Activated CD4-positive, alpha-beta memory T cell treated with anti-CD3 and anti-CD28 coated beads, Interleukin-2, amount 10 ng/mL, durations not matched to agents 7 days and 5 days (primary cell): ENCODE measurements at regions of chr21 and their contacts with region 1.

Region 1: GRCh38 chr21:36319765-36320420 is at the start of gene MORC3:
- DNase-seq: peak; percentile 99
- H3K4me3 Mint-ChIP-seq: peak within 1 kb of the TSS; percentile 88
- H3K27ac Mint-ChIP-seq: peak within 1 kb of the TSS; percentile 96
- H3K4me1 Mint-ChIP-seq: peaks cover 26% of the 10 kb centered on the region
- H3K27me3 Mint-ChIP-seq: peaks cover 3% of the 10 kb centered on the region
- total RNA-seq, gene MORC3: 43.6 to 44.3 TPM

Region 2: GRCh38 chr21:36135391-36136102 is 184.3 kb before region 1 on chr21:
- CTCF ChIA-PET with region 1: interaction called, 8 read pairs
- POLR2A ChIA-PET with region 1: interaction called, 52 read pairs
- DNase-seq: peak; percentile 80
- H3K4me3 Mint-ChIP-seq: peak overlapping the region; percentile 80
- H3K27ac Mint-ChIP-seq: peak overlapping the region; percentile 91
- H3K4me1 Mint-ChIP-seq: peaks cover 45% of the 10 kb centered on the region
- H3K27me3 Mint-ChIP-seq: no peaks in the 10 kb centered on the region

Region 3: DNA sequence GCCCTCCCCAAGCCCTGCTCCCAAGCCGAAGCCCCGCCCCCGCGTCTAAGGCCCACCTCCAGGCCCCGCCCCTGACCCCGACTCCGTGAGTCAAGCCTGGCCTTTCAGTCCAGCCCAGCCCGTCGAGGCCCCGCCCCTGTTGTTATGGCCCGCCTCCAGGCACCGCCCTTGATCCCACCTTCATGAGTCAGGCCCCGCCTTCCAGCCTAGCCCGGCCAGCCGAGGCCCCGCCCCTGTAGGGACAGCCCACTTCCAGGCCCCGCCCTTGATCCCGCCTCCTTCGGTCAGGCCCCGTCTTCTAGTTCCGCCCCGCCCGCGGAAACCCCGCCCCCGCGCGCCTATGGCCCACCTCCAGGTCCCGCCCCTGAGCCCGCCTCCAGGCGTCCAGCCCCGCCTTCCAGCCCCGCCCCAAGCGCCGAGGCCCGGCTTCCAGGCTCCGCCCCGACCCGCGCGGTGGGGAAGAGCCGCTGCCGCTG is 163.5 kb before region 1 on chr21:
- CTCF ChIA-PET with region 1: interaction called, 5 read pairs
- POLR2A ChIA-PET with region 1: interaction called, 13 read pairs
- DNase-seq: peak; percentile 100
- H3K4me3 Mint-ChIP-seq: peak overlapping the region; percentile 80
- H3K27ac Mint-ChIP-seq: peak overlapping the region; percentile 31
- H3K4me1 Mint-ChIP-seq: peaks cover 41% of the 10 kb centered on the region
- H3K27me3 Mint-ChIP-seq: peaks cover 6% of the 10 kb centered on the region

Region 4: DNA sequence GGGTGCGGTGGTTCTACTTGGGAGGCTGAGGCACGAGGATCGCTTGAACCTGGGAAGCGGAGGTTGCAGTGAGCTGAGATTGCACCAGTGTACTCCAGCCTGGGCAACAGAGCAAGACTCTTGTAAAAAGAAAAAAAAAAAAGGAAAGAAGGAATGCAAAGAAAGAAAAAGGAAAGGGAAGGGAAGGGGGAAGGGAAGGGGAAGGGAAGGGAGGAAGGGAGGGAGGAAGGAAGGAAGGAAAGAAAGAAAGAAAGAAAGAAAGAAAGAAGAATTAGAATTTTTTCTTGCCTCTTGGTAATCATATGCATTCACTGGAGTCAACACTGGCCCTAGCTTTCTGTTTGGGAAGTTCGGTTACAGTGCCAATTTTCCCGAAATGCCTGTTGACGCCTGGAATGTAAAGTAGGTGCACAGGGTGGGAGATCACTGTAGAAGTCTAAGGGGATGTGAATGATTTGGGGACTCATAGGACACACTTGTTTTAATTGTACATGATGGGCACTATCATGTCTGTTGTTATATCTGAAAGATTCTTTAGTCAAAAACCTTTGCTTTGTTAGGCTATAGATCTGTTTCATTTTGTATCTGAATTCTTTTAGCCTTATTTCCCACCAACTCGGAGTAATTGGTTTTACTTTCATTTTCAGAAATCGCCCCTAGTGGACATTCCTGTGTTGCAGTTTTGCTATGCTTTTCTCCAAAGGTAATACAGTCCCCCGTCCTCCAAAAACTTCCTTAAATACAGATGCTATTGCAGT is 59.7 kb before region 1 on chr21:
- CTCF ChIA-PET with region 1: interaction called, 8 read pairs
- POLR2A ChIA-PET with region 1: interaction called, 12 read pairs
- DNase-seq: peak; percentile 46
- H3K4me3 Mint-ChIP-seq: peak overlapping the region; percentile 60
- H3K27ac Mint-ChIP-seq: peak overlapping the region; percentile 81
- H3K4me1 Mint-ChIP-seq: peaks cover 19% of the 10 kb centered on the region
- H3K27me3 Mint-ChIP-seq: no peaks in the 10 kb centered on the region

Region 5: GRCh38 chr21:36330904-36331303 is 11.0 kb after region 1 on chr21:
- CTCF ChIA-PET with region 1: interaction called, 28 read pairs
- POLR2A ChIA-PET with region 1: interaction called, 10 read pairs
- DNase-seq: peak; percentile 55
- H3K4me3 Mint-ChIP-seq: no peak overlapping the region
- H3K27ac Mint-ChIP-seq: peak overlapping the region; percentile 30
- H3K4me1 Mint-ChIP-seq: peaks cover 28% of the 10 kb centered on the region
- H3K27me3 Mint-ChIP-seq: no peaks in the 10 kb centered on the region